Panc1 (cell line): ENCODE measurements at regions of chr3 and their contacts with region 1.

Region 1: GRCh38 chr3:185912929-185913901 is 24.6 kb downstream of the TRA2B start:
- DNase-seq: no peak
- ATAC-seq: peak; percentile 35; the same call in 1 of the 2 replicates
- H3K4me3 ChIP-seq: no peak overlapping the region
- H3K27ac ChIP-seq: no peak overlapping the region
- H3K4me1 ChIP-seq: peaks cover 14% of the 10 kb centered on the region
- H3K27me3 ChIP-seq: no peaks in the 10 kb centered on the region
- CTCF ChIP-seq: no peak

Region 2: DNA sequence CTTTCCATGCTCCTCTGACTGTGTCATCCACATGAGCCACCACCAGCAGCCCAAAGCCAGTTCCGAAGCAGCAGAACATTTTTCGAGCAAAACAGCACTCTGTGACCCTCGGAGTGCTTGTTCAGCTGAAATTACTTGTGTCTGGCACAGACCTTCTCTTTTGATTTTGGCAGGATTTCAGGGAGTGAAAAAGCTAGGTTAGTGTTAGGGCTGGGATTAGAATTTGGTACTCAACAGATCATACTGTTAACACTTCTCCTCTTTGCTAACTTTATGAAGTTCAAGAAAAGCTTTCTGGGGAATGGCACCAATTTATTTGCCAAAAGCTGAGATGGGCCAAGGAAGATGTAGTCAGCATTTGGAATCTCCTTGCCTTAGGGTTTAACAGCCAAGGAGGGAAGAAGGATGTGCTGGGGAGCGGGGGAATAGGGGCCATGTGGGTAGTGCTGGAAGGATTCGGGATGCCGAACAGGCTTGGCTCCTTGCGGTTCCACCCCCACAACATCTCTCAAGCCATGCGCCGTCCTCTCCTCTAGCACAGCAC is 79.7 kb after region 1 on chr3:
- CTCF ChIA-PET with region 1: interaction called, 6 read pairs
- POLR2A ChIA-PET with region 1: no interaction called
- in situ Hi-C with region 1: loop called (anchors 5 kb)
- intact Hi-C with region 1: no loop called
- DNase-seq: no peak
- ATAC-seq: no peak
- H3K4me3 ChIP-seq: no peak overlapping the region
- H3K27ac ChIP-seq: no peak overlapping the region
- H3K4me1 ChIP-seq: no peaks in the 10 kb centered on the region
- H3K27me3 ChIP-seq: peaks cover 6% of the 10 kb centered on the region
- CTCF ChIP-seq: no peak

Region 3: GRCh38 chr3:186021673-186022362 is 108.6 kb after region 1 on chr3:
- CTCF ChIA-PET with region 1: no interaction called
- POLR2A ChIA-PET with region 1: interaction called, 18 read pairs
- in situ Hi-C with region 1: no loop called
- intact Hi-C with region 1: no loop called
- DNase-seq: peak; percentile 12
- ATAC-seq: peak; percentile 79
- H3K4me3 ChIP-seq: no peak overlapping the region
- H3K27ac ChIP-seq: no peak overlapping the region
- H3K4me1 ChIP-seq: no peaks in the 10 kb centered on the region
- H3K27me3 ChIP-seq: no peaks in the 10 kb centered on the region
- CTCF ChIP-seq: no peak